GM12878 (cell line): ENCODE measurements at regions of chr2 and their contacts with region 1.

Region 1: GRCh38 chr2:187333804-187334203 is 114.2 kb downstream of the CALCRL start:
- DNase-seq: no peak
- ATAC-seq: no peak
- H3K4me3 ChIP-seq: no peak overlapping the region
- H3K27ac ChIP-seq: no peak overlapping the region
- H3K4me1 ChIP-seq: no peaks in the 10 kb centered on the region
- H3K27me3 ChIP-seq: no peaks in the 10 kb centered on the region
- CTCF ChIP-seq: no peak
- EP300 ChIP-seq: no peak
- POLR2A ChIP-seq: no peak
- RAD21 ChIP-seq: no peak

Region 2: DNA sequence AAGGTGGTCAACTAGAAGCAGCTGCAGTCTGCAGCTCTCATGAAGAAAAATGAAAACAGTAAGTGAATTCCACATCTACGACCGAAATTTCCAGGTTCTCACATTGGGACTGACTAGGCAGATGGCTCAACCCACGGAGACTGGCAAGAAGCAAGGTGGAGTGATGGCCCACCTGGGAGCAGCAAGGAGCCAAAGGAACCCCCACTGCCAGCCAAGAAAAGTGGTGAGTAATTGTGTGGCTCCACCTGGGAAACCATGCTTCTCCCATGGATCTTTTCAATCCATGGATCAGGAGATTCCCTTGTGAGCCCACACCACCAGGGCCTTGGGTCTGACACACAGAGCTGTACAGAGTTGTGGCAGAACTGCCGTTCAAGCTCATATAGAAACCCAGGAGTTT is 548.9 kb before region 1 on chr2:
- CTCF ChIA-PET with region 1: no interaction called
- POLR2A ChIA-PET with region 1: no interaction called
- RAD21 ChIA-PET with region 1: no interaction called
- SMC1A ChIA-PET with region 1: no interaction called
- in situ Hi-C with region 1: no loop called
- intact Hi-C with region 1: no loop called
- DNase-seq: no peak
- ATAC-seq: no peak
- H3K4me3 ChIP-seq: no peak overlapping the region
- H3K27ac ChIP-seq: no peak overlapping the region
- H3K4me1 ChIP-seq: no peaks in the 10 kb centered on the region
- H3K27me3 ChIP-seq: no peaks in the 10 kb centered on the region
- CTCF ChIP-seq: no peak
- EP300 ChIP-seq: no peak
- POLR2A ChIP-seq: no peak
- RAD21 ChIP-seq: no peak

Region 3: GRCh38 chr2:187299122-187299906 is 34.5 kb before region 1 on chr2:
- CTCF ChIA-PET with region 1: no interaction called
- POLR2A ChIA-PET with region 1: no interaction called
- RAD21 ChIA-PET with region 1: no interaction called
- SMC1A ChIA-PET with region 1: no interaction called
- in situ Hi-C with region 1: no loop called
- intact Hi-C with region 1: no loop called
- DNase-seq: no peak
- ATAC-seq: peak; percentile 79
- H3K4me3 ChIP-seq: no peak overlapping the region
- H3K27ac ChIP-seq: no peak overlapping the region
- H3K4me1 ChIP-seq: no peaks in the 10 kb centered on the region
- H3K27me3 ChIP-seq: no peaks in the 10 kb centered on the region
- CTCF ChIP-seq: peak; percentile 32 to 49 (median 38); a peak in 4 of 6 replicates
- EP300 ChIP-seq: no peak
- POLR2A ChIP-seq: no peak
- RAD21 ChIP-seq: peak; percentile 69

Region 4: GRCh38 chr2:187319441-187320108 is 14.2 kb before region 1 on chr2:
- CTCF ChIA-PET with region 1: interaction called, 7 read pairs
- POLR2A ChIA-PET with region 1: interaction called, 4 read pairs
- RAD21 ChIA-PET with region 1: interaction called, 5 read pairs
- SMC1A ChIA-PET with region 1: interaction called, 20 read pairs
- in situ Hi-C with region 1: no loop called
- intact Hi-C with region 1: no loop called
- DNase-seq: no peak
- ATAC-seq: no peak; the same call in 2 of the 3 replicates
- H3K4me3 ChIP-seq: no peak overlapping the region
- H3K27ac ChIP-seq: no peak overlapping the region
- H3K4me1 ChIP-seq: no peaks in the 10 kb centered on the region
- H3K27me3 ChIP-seq: no peaks in the 10 kb centered on the region
- CTCF ChIP-seq: no peak
- EP300 ChIP-seq: no peak
- POLR2A ChIP-seq: no peak
- RAD21 ChIP-seq: no peak

Region 5: GRCh38 chr2:187345338-187345737 is 11.5 kb after region 1 on chr2:
- CTCF ChIA-PET with region 1: interaction called, 5 read pairs
- POLR2A ChIA-PET with region 1: no interaction called
- RAD21 ChIA-PET with region 1: interaction called, 3 read pairs
- SMC1A ChIA-PET with region 1: interaction called, 20 read pairs
- in situ Hi-C with region 1: no loop called
- intact Hi-C with region 1: no loop called
- DNase-seq: no peak
- ATAC-seq: no peak
- H3K4me3 ChIP-seq: no peak overlapping the region
- H3K27ac ChIP-seq: no peak overlapping the region
- H3K4me1 ChIP-seq: no peaks in the 10 kb centered on the region
- H3K27me3 ChIP-seq: no peaks in the 10 kb centered on the region
- CTCF ChIP-seq: no peak
- EP300 ChIP-seq: no peak
- POLR2A ChIP-seq: no peak
- RAD21 ChIP-seq: no peak